ENCODE measurements at regions of chr17 and their contacts with region 1.

Region 1: DNA sequence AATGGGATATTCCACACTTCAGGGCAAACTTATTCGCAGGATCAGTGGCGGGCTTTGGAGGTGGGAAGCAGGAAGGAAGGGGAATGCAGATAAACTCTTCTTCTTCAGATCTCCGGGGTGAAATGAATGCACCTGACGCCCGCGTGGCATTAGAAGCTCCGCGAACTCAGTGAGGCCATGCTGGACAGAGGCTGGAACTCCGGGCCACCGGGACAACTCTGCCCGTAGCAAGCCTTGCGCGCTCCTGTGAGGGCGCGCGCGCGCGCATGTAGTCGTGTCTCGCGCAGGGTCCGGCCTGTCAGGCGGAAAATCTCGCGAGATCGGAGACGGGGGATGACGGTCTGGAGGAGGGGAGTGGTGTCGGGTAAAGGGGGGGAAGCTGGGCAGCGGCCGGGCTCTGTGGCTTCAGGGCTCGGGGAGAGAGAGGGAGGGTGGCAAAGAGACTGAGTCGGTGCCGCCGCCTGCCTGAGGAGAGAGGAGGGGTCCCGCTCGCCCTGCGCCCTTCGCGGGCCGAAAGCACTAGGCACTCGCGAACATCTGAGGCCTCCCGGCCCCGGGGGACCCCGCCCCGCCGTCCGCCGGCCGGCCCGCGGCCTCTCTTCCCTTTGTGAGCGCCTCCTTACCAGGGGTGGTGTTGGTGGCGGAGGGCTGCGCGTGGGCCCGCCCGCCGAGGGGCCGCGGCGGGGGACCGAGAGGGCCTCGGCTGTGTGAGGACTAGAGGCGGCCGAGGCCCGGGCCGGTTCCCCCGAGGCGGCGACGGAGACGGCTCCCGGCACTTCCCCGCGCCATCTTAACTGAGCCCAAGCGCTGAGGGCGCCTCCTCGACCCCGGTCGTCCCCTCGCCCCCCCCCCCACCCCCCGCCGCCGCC is at the start of gene TAOK1:
- DNase-seq: peak; percentile 98
- ATAC-seq: peak; percentile 95
- H3K4me3 ChIP-seq: peak within 1 kb of the TSS; percentile 70
- H3K27ac ChIP-seq: peak within 1 kb of the TSS; percentile 95
- H3K4me1 ChIP-seq: no peaks in the 10 kb centered on the region
- H3K27me3 ChIP-seq: no peaks in the 10 kb centered on the region
- CTCF ChIP-seq: no peak
- POLR2A ChIP-seq: peak; percentile 95
- RAD21 ChIP-seq: no peak
- total RNA-seq, gene TAOK1: 69.7 and 91.8 TPM in 2 replicates

Region 2: GRCh38 chr17:29412780-29413565 is 22.8 kb after region 1 on chr17:
- CTCF ChIA-PET with region 1: no interaction called
- POLR2A ChIA-PET with region 1: interaction called, 3 read pairs
- dilution Hi-C with region 1: no loop called
- in situ Hi-C with region 1: no loop called
- intact Hi-C with region 1: loop called (anchors 2 kb)
- DNase-seq: peak; percentile 78
- ATAC-seq: peak; percentile 77
- H3K4me3 ChIP-seq: no peak overlapping the region
- H3K27ac ChIP-seq: peak overlapping the region; percentile 50
- H3K4me1 ChIP-seq: peaks cover 18% of the 10 kb centered on the region
- H3K27me3 ChIP-seq: no peaks in the 10 kb centered on the region
- CTCF ChIP-seq: no peak
- POLR2A ChIP-seq: no peak
- RAD21 ChIP-seq: no peak

Region 3: DNA sequence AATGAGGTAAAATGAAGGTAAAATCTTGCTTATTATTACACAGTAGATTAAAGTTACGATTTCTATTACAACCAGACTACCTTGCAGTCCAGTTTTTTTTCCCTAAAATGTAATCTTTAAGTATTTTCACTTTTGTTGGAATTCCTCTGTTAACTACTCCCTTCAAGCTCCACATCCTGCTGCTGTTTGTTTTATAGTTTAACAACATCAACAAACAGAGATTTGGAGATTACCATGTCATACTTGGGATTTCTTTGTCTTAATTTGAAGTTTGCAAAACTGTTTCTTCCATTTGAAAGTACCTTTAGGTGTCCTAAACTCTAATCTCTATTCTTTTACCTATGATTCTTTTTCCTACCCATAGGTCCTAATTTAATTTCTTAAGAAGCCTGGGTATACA is 93.3 kb after region 1 on chr17:
- CTCF ChIA-PET with region 1: no interaction called
- POLR2A ChIA-PET with region 1: no interaction called
- dilution Hi-C with region 1: no loop called
- in situ Hi-C with region 1: no loop called
- intact Hi-C with region 1: loop called (anchors 5 kb)
- DNase-seq: no peak
- ATAC-seq: peak; percentile 59
- H3K4me3 ChIP-seq: no peak overlapping the region
- H3K27ac ChIP-seq: no peak overlapping the region
- H3K4me1 ChIP-seq: no peaks in the 10 kb centered on the region
- H3K27me3 ChIP-seq: no peaks in the 10 kb centered on the region
- CTCF ChIP-seq: no peak
- POLR2A ChIP-seq: no peak
- RAD21 ChIP-seq: no peak

Measured in IMR-90 (cell line).